ENCODE measurements at regions of chr14 and their contacts with region 1.

Region 1: DNA sequence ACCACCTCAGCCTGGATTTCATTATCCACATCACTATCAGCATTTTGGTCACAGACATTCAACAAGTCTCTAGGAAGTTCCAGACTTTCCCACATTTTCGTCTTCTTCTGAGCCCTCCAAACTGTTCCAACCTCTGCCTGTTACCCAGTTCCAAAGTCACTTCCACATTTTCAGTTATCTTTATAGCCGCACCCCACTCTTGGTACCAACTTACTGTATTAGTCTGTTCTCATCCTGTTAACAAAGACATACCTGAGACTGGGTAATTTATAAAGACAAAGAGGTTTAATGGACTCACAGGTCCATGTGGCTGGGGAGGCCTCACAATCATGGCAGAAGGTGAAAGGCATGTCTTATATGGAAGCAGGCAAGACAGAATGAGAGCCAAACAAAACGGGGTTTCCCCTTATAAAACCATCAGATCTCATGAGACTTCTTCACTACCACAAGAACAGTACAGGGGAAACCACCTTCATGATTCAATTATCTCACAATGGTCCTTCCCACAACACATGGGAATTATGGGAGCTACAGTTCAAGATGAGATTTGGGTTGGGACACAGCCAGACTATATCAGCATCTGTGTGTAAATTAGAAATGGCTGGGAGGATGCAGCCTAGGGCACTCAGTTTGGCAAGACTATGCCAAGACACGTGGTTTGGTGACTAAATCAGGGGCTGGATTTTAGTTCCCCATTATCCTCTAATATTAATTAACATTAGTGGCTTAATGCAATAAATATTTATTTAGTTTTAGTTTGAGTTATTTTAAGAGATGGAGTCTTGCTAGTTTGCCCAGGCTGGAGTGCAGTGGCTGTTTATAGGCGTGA is 16.2 kb upstream of the FUT8 start:
- DNase-seq: peak; percentile 19
- H3K4me3 Mint-ChIP-seq: no peak overlapping the region
- H3K27ac Mint-ChIP-seq: peak overlapping the region; percentile 42
- H3K4me1 Mint-ChIP-seq: peaks cover 24% of the 10 kb centered on the region
- H3K27me3 Mint-ChIP-seq: no peaks in the 10 kb centered on the region

Region 2: DNA sequence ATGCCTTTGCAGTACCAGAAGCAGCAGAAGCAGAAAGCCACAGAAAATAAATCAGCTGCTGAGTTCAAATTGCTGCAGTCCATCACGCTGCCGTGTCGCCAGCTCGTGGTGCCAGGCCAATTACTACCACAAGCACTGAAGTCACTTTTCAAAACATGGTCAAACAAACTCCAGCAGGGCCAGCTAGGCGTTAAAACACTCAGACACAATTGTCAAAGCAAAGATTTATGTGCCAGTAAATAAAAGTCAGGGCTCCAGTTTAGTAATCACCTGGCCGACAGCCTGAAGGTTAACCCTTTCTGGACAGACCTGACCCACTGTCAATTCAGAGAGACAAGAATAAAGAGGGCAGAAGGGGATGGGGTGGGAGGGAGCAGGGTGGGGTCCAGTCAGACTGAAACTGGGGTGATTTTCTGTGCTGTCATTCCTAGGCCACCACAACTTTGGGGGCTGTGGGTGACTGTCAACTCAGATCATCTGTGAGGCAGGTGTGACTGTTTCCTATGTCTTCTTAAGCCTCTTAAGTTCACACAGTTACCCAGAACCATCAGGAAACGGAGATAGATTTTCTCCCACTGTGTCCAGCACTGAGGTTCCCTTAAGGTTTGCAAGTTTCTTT is 93.6 kb before region 1 on chr14:
- CTCF ChIA-PET with region 1: no interaction called
- intact Hi-C with region 1: loop called (anchors 1 kb)
- DNase-seq: peak; percentile 82
- H3K4me3 Mint-ChIP-seq: peak overlapping the region; percentile 23
- H3K27ac Mint-ChIP-seq: peak overlapping the region; percentile 95
- H3K4me1 Mint-ChIP-seq: peaks cover 61% of the 10 kb centered on the region
- H3K27me3 Mint-ChIP-seq: no peaks in the 10 kb centered on the region